ENCODE measurements at regions of chr20 and their contacts with region 1.

Region 1: GRCh38 chr20:43514062-43514999 is 6.8 kb downstream of the L3MBTL1 start:
- DNase-seq: peak; percentile 98
- H3K4me3 ChIP-seq: peak overlapping the region; percentile 45 to 71 (median 46)
- H3K27ac ChIP-seq: peak overlapping the region; percentile 12
- H3K4me1 ChIP-seq: no peaks in the 10 kb centered on the region
- H3K27me3 ChIP-seq: no peaks in the 10 kb centered on the region
- CTCF ChIP-seq: peak; percentile 15 to 55
- POLR2A ChIP-seq: no peak

Region 2: DNA sequence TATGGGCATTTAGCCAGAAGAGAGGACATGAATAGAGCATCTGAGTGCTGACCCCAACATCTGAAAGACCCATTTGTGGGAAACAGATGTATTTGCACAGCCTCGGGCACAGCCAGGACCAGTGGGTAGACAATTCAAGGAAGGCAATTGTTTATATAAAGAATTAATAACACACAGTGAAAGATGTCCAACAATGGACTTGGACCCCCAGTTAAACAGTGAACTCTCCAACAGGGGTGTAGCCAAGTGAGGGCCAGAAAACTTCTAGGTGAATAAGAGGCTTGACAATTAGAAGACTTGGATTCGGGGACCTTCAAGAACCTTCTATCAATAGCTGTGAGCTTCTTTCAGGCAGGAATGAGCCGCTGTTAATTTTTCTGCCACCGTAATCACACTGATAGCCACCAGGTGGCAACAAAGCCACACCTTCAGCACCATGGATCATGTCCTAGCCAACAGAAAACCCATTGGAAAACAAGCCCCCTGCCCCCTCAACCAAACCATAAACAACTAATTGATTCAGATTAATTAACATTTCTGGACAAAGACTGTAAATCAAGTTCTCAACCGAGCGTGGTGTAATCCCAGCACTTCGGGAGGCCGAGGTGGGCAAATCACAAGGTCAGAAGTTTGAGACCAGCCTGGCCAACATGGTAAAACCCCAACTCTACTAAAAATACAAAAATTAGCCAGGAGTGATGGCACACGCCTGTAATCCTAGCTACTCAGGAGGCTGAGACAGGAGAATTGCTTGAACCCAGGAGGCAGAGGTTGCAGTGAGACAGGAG is 65.4 kb before region 1 on chr20:
- CTCF ChIA-PET with region 1: interaction called, 4 read pairs
- POLR2A ChIA-PET with region 1: no interaction called
- dilution Hi-C with region 1: no loop called
- intact Hi-C with region 1: loop called (anchors 2 kb)
- DNase-seq: peak; percentile 78
- H3K4me3 ChIP-seq: no peak overlapping the region
- H3K27ac ChIP-seq: no peak overlapping the region
- H3K4me1 ChIP-seq: peaks cover 7% of the 10 kb centered on the region
- H3K27me3 ChIP-seq: peaks cover 10 to 16% of the 10 kb centered on the region in 2 experiments
- CTCF ChIP-seq: peak; percentile 67 to 68
- POLR2A ChIP-seq: no peak

Region 3: DNA sequence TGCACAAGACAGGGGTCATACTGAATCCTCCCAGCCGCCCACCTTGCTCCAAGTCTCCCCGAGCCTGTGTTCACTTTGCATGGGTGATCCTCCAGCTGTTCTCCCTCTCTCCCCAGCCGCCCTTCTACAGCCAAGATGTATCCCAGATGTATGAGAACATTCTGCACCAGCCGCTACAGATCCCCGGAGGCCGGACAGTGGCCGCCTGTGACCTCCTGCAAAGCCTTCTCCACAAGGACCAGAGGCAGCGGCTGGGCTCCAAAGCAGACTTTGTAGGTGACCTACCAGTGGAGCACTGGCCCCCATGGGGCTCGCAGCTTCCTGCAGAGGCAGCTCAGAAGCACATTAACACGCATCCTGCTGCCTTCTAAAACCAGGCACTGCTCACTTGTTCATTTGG is 61.8 kb after region 1 on chr20:
- CTCF ChIA-PET with region 1: no interaction called
- POLR2A ChIA-PET with region 1: no interaction called
- dilution Hi-C with region 1: no loop called
- intact Hi-C with region 1: no loop called
- DNase-seq: no peak
- H3K4me3 ChIP-seq: no peak overlapping the region
- H3K27ac ChIP-seq: no peak overlapping the region
- H3K4me1 ChIP-seq: no peaks in the 10 kb centered on the region
- H3K27me3 ChIP-seq: no peaks in the 10 kb centered on the region
- CTCF ChIP-seq: no peak
- POLR2A ChIP-seq: no peak

Region 4: GRCh38 chr20:43590392-43591323 is 76.3 kb after region 1 on chr20 and contains the start of gene IFT52:
- CTCF ChIA-PET with region 1: no interaction called
- POLR2A ChIA-PET with region 1: interaction called, 3 read pairs
- dilution Hi-C with region 1: no loop called
- intact Hi-C with region 1: loop called (anchors 2 kb)
- DNase-seq: peak; percentile 93
- H3K4me3 ChIP-seq: peak within 1 kb of the TSS; percentile 64 to 100 (median 80)
- H3K27ac ChIP-seq: peak within 1 kb of the TSS; percentile 91
- H3K4me1 ChIP-seq: peaks cover 9% of the 10 kb centered on the region
- H3K27me3 ChIP-seq: peaks cover 0 to 2% of the 10 kb centered on the region in 2 experiments
- CTCF ChIP-seq: no peak
- POLR2A ChIP-seq: peak; percentile 32
- total RNA-seq, gene IFT52: 29.7 and 30.0 TPM in 2 replicates